ENCODE measurements at regions of chr22 and their contacts with region 1.

Region 1: GRCh38 chr22:49827853-49828598 is at the start of gene BRD1:
- DNase-seq: peak; percentile 68
- H3K4me3 Mint-ChIP-seq: peak within 1 kb of the TSS; percentile 92
- H3K27ac Mint-ChIP-seq: peak within 1 kb of the TSS; percentile 99
- H3K4me1 Mint-ChIP-seq: peaks cover 61% of the 10 kb centered on the region
- H3K27me3 Mint-ChIP-seq: no peaks in the 10 kb centered on the region
- total RNA-seq, gene BRD1: 54.7 to 55.4 TPM

Region 2: DNA sequence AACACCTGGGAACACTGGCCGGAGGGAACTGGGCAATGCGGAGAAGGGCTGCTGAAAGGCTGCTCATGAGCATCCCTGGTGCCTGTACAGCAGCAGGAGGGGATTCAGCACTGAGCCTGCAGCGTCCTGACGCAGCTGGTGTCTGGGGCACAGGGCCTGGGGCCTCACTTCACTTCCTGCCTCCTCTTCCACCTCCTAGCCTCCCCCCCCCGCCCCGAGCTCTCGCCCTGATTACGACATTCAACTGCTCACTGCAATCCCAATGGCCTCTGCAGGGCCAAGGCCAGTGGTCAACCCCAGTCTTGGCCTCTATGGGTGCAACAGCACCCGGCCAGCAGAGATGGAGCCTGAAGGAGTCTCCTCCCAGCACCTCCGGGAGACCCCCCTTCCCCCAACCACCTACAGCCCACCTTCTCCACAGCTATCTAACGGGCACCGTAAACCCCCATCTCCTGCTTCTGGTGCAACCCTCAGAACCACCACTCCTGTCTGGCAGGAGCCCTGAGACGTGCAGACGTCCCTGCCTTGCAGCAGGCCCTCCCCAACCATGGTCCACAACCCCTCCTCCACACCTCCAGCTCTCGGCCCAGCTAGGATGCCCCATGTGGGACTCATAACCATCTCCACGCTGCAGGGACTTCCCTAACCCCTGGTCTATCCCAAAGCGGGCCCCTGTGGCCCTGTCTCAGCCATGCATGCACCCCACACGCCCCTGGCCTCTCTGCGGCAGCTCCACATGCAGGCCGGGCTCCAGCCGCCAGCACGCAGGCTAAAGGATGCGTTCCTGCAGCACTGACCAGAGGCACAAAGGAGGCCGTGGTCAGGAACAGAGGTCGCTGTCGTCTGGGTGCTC is 38.5 kb before region 1 on chr22:
- CTCF ChIA-PET with region 1: no interaction called
- POLR2A ChIA-PET with region 1: interaction called, 12 read pairs
- DNase-seq: peak; percentile 57
- H3K4me3 Mint-ChIP-seq: peak overlapping the region; percentile 56
- H3K27ac Mint-ChIP-seq: peak overlapping the region; percentile 92
- H3K4me1 Mint-ChIP-seq: peaks cover 72% of the 10 kb centered on the region
- H3K27me3 Mint-ChIP-seq: no peaks in the 10 kb centered on the region

Region 3: DNA sequence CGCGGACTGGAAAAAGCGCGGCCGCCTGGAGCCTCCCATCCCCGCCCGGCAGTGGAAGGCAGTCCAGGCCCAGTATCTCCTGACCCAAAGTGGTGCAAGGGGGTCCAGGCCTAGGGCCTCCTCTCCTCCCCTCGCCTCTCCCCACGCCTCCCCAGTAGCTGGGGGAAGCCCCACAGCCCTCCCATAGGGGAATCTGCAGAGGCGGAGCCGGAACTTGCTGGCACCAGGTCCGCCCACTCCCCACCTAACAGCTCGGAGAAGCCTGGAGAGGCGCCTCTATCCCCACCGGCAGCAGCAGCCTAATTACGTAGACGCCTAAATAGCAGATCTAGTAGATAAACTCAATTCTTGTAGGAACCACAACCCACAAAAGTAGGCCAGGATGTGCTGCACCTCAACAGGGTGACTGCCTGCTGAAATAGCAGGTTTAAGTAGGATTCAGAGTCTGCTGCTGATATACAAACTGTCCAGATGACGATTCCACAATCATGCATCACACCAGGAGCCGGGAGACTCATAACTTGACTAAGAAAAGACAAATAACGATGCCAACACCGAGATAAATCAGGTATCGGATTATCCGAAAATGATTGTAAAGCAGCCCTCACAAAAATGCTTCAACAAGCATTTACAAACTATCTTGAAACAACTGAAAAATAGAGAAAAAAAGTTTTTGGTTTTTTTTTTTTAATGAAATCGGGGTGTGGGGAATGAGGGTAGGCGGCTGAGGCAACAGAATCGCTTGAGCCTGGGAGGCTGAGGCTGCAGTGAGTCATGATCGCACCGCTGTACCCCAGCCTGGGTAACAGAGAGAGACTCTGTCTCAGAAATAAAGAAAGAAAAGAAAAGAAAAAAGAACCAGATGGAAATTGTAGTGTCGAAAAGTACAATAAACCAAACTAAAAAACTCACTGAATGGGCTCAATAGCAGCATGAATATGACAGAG is 11.0 kb after region 1 on chr22:
- CTCF ChIA-PET with region 1: interaction called, 13 read pairs
- POLR2A ChIA-PET with region 1: interaction called, 45 read pairs
- DNase-seq: peak; percentile 90
- H3K4me3 Mint-ChIP-seq: peak overlapping the region; percentile 63
- H3K27ac Mint-ChIP-seq: peak overlapping the region; percentile 96
- H3K4me1 Mint-ChIP-seq: peaks cover 44% of the 10 kb centered on the region
- H3K27me3 Mint-ChIP-seq: no peaks in the 10 kb centered on the region

Region 4: DNA sequence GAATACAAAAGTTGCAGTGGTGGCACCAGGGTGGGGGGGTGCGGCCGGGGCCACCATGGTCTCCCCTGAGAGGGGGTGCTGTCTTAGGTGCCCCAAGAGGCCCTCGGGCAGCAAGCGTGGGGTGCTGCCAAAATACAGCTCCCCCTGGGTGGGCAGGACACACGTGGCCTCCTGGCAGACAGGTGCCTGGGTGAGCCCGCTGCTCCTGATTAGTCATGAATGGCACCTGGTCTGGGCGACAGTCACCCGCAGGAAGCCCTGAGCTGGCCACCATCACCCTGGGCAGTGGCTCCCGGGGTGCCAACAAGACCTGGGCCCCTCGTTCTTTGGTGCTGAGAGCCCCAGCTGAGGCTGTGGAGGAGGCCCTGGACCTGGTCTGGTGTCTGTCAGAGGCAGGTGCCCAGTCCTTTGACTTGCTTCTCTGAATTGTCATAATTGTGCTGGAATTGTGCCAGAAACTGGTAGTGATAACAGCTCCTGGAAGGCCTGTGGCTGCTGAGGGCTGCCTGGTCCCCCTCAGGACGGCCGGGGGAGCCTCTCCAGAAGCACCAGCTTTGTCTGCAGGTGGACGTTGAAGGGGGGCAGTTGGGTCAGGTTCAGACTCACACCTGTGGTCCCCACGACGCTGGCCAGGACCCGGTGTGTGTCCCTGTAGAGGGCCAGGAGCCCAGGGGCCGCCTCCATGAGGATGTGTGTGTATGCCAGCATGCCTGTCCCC is 75.5 kb after region 1 on chr22:
- CTCF ChIA-PET with region 1: no interaction called
- POLR2A ChIA-PET with region 1: no interaction called
- DNase-seq: no peak
- H3K4me3 Mint-ChIP-seq: no peak overlapping the region
- H3K27ac Mint-ChIP-seq: no peak overlapping the region
- H3K4me1 Mint-ChIP-seq: peaks cover 3% of the 10 kb centered on the region
- H3K27me3 Mint-ChIP-seq: no peaks in the 10 kb centered on the region

Region 5: DNA sequence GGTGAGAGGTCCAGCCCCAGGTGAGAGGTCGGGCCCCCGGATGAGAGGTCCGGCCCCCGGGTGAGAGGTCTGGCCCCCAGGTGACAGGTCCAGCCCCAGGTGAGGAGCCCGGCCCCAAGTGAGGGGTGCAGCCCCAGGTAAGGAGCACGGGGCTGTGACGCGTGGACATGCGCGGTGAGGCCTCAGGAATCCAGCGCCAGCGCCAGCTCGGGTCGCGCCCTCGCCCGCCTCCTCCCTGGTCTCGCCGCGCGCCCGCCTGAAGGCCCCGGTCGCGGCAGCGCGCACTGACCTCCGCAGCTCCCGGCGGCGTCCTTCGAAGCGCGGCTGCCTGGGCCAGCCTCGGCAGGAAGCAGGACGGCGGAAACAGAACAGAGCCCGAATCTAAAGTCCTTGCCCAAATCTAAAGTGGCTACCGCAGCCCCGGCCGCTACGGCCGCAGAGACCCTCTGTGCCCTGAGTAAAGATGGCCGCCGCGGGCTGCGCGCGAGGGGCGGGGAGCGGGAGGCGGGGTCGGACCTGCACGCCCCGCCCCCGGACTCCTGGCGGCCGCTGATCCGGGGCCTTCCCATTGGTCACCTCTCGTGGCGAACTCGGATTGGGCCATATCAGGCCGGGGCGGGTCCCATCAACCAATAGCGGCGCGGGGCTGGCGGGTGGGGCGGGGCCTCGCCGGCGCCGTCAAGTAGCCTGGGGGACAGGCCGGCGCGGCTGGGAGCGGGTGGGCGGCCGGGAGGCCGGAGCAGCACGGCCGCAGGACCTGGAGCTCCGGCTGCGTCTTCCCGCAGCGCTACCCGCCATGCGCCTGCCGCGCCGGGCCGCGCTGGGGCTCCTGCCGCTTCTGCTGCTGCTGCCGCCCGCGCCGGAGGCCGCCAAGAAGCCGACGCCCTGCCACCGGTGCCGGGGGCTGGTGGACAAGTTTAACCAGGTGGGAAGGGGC is 90.2 kb after region 1 on chr22 and contains the starts of genes ALG12 and CRELD2:
- CTCF ChIA-PET with region 1: no interaction called
- POLR2A ChIA-PET with region 1: interaction called, 23 read pairs
- DNase-seq: peak; percentile 97
- H3K4me3 Mint-ChIP-seq: peak within 1 kb of the TSS; percentile 80
- H3K27ac Mint-ChIP-seq: peak within 1 kb of the TSS; percentile 81
- H3K4me1 Mint-ChIP-seq: peaks cover 24% of the 10 kb centered on the region
- H3K27me3 Mint-ChIP-seq: no peaks in the 10 kb centered on the region
- total RNA-seq, gene ALG12: 14.7 to 20.6 TPM
- total RNA-seq, gene CRELD2: 50.0 to 51.2 TPM

Region 6: DNA sequence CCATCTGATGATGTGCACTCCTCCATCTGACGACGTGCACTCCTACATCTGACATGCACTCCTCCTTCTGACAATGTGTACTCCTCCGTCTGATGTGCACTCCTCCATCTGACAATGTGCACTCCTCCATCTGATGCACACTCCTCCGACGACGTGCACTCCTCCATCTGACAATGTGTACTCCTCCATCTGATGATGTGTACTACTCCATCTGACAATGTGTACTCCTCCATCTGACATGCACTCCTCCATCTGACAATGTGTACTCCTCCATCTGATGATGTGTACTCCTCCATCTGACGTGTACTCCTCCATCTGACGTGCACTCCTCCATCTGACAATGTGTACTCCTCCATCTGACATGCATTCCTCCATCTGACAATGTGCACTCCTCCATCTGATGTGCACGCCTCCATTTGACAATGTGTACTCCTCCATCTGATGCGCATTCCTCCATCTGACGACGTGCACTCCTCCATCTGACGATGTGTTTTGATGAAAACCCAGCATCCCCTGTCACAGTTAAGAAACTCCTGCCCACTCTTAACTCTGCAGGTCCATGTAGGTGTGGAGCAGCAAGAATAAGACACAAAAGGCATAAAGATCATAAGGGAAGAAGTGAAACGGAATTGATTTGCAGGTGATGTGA is 194.3 kb after region 1 on chr22:
- CTCF ChIA-PET with region 1: no interaction called
- POLR2A ChIA-PET with region 1: no interaction called
- DNase-seq: no peak
- H3K4me3 Mint-ChIP-seq: no peak overlapping the region
- H3K27ac Mint-ChIP-seq: no peak overlapping the region
- H3K4me1 Mint-ChIP-seq: peaks cover 22% of the 10 kb centered on the region
- H3K27me3 Mint-ChIP-seq: peaks cover 4% of the 10 kb centered on the region

Measured in activated CD4-positive, alpha-beta memory T cell treated with anti-CD3 and anti-CD28 coated beads, Interleukin-2, amount 10 ng/mL, durations not matched to agents 7 days and 5 days (primary cell).